GM12878 (cell line): ENCODE measurements at regions of chr6 and their contacts with region 1.

Region 1: GRCh38 chr6:85443349-85444119 is 6.3 kb upstream of the NT5E start:
- DNase-seq: no peak
- ATAC-seq: no peak
- H3K4me3 ChIP-seq: no peak overlapping the region
- H3K27ac ChIP-seq: no peak overlapping the region
- H3K4me1 ChIP-seq: peaks cover 3% of the 10 kb centered on the region; the same call in 1 of the 2 replicates
- H3K27me3 ChIP-seq: no peaks in the 10 kb centered on the region
- CTCF ChIP-seq: no peak
- EP300 ChIP-seq: no peak
- POLR2A ChIP-seq: no peak
- RAD21 ChIP-seq: no peak

Region 2: GRCh38 chr6:85431271-85431670 is 12.3 kb before region 1 on chr6:
- CTCF ChIA-PET with region 1: interaction called, 3 read pairs
- POLR2A ChIA-PET with region 1: interaction called, 7 read pairs
- RAD21 ChIA-PET with region 1: no interaction called
- SMC1A ChIA-PET with region 1: interaction called, 20 read pairs
- in situ Hi-C with region 1: no loop called
- intact Hi-C with region 1: no loop called
- DNase-seq: no peak
- ATAC-seq: no peak
- H3K4me3 ChIP-seq: no peak overlapping the region
- H3K27ac ChIP-seq: no peak overlapping the region
- H3K4me1 ChIP-seq: no peaks in the 10 kb centered on the region
- H3K27me3 ChIP-seq: no peaks in the 10 kb centered on the region
- CTCF ChIP-seq: no peak
- EP300 ChIP-seq: no peak
- POLR2A ChIP-seq: no peak
- RAD21 ChIP-seq: no peak